ENCODE measurements at regions of chr2 and their contacts with region 1.

Region 1: GRCh38 chr2:134460583-134460998 is 206.7 kb downstream of the MGAT5 start:
- DNase-seq: peak; percentile 33 to 63 (median 46)
- H3K4me3 ChIP-seq: no peak overlapping the region
- H3K27ac ChIP-seq: no peak overlapping the region
- H3K4me1 ChIP-seq: no peaks in the 10 kb centered on the region
- H3K27me3 ChIP-seq: no peaks in the 10 kb centered on the region
- CTCF ChIP-seq: peak; percentile 15 to 46 (median 34)
- EP300 ChIP-seq: no peak
- POLR2A ChIP-seq: no peak

Region 2: DNA sequence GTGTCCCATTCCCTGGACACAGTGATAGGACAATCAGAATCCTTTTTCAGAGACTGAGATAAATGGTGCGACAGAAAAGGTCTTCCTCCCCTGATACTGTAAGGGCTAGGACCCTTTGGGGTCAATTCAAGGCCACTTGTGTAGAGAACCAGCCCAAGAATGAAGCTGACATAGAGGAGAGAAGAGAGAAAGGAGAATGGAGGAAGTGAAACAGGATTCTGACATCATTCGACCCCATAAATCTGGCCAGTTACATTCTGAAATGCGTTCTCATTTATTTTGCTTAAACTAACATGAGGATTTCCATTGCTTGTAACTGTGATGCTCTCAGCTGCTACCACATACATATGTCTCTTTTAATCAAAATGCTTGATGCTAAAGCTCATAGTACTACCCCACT is 110.1 kb after region 1 on chr2:
- intact Hi-C with region 1: no loop called
- DNase-seq: no peak
- H3K4me3 ChIP-seq: no peak overlapping the region
- H3K27ac ChIP-seq: no peak overlapping the region
- H3K4me1 ChIP-seq: no peaks in the 10 kb centered on the region
- H3K27me3 ChIP-seq: no peaks in the 10 kb centered on the region
- CTCF ChIP-seq: no peak
- EP300 ChIP-seq: no peak
- POLR2A ChIP-seq: no peak

Region 3: GRCh38 chr2:134623796-134624195 is 163.2 kb after region 1 on chr2:
- intact Hi-C with region 1: no loop called
- DNase-seq: no peak
- H3K4me3 ChIP-seq: no peak overlapping the region
- H3K27ac ChIP-seq: no peak overlapping the region
- H3K4me1 ChIP-seq: no peaks in the 10 kb centered on the region
- H3K27me3 ChIP-seq: no peaks in the 10 kb centered on the region
- CTCF ChIP-seq: no peak
- EP300 ChIP-seq: no peak
- POLR2A ChIP-seq: no peak

Region 4: DNA sequence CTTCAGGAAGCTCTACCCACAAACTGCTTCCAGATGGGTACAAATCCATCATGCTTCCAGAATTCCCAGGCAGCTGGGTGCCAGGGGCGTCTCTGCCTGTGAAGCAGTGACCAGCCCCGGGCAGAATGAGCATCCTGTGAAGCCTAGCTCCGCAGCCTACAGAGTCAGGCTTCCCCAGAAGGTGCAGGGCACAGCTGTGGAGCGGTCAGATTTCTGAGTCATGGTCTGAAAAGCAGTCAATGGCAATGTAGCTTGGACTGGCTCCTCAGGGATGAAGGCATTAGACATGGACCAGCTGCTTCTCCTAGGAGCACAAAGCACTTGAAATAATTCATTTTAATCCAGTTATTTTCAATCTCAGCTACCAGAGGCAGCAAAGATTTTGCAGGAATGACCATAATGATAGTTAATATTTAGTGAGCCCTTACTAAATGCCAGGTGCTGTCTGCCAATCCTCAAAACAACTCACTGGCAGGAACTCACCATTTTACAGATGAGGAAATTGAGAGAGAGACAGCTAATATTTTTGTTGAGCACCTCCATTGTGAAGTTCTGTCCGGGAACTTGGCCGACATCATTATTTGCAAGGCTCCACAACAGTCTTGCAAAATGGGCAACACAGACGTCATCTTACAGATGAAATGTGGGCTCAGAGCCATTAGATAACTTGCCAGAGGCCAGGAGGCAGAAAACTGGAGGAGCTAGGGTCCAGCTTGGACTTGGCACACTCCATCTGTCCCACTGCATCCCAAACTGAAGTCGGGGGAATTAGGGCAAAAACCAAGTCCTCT is 409.6 kb after region 1 on chr2:
- intact Hi-C with region 1: loop called in 1 of 4 experiments (anchors 10 kb)
- DNase-seq: peak in 1 of 5 donors; percentile 10
- H3K4me3 ChIP-seq: no peak overlapping the region
- H3K27ac ChIP-seq: no peak overlapping the region
- H3K4me1 ChIP-seq: no peaks in the 10 kb centered on the region
- H3K27me3 ChIP-seq: no peaks in the 10 kb centered on the region
- CTCF ChIP-seq: no peak
- EP300 ChIP-seq: no peak
- POLR2A ChIP-seq: no peak

Region 5: GRCh38 chr2:134892282-134893070 is 431.9 kb after region 1 on chr2:
- intact Hi-C with region 1: loop called in 1 of 4 experiments (anchors 5 kb)
- DNase-seq: no peak
- H3K4me3 ChIP-seq: no peak overlapping the region
- H3K27ac ChIP-seq: no peak overlapping the region
- H3K4me1 ChIP-seq: no peaks in the 10 kb centered on the region
- H3K27me3 ChIP-seq: no peaks in the 10 kb centered on the region
- CTCF ChIP-seq: no peak
- EP300 ChIP-seq: no peak
- POLR2A ChIP-seq: no peak

Region 6: GRCh38 chr2:134900151-134900550 is 439.6 kb after region 1 on chr2:
- intact Hi-C with region 1: loop called in 2 of 4 experiments (anchors 5 to 10 kb)
- DNase-seq: no peak
- H3K4me3 ChIP-seq: no peak overlapping the region
- H3K27ac ChIP-seq: no peak overlapping the region
- H3K4me1 ChIP-seq: no peaks in the 10 kb centered on the region
- H3K27me3 ChIP-seq: no peaks in the 10 kb centered on the region
- CTCF ChIP-seq: no peak
- EP300 ChIP-seq: no peak
- POLR2A ChIP-seq: no peak

Region 7: DNA sequence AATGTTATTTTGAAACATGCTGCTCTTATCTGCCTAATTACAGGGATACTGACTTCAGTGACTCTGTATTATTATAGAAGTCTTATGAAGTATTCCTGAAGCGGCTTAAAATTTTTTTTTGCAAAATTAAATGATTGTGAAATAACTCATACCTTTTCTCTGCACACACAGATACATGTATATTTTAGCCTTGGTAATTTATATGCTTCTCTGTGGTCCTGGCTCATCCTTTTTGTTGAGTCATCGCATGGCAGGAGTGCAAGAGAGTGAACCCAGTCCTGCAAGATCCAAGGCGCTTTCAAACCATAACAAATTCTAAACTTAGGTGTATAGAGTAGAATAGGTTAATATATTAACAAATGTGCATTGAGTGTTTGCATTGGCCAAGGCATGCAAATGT is 466.6 kb after region 1 on chr2:
- intact Hi-C with region 1: no loop called
- DNase-seq: no peak
- H3K4me3 ChIP-seq: no peak overlapping the region
- H3K27ac ChIP-seq: no peak overlapping the region
- H3K4me1 ChIP-seq: peaks cover 12% of the 10 kb centered on the region
- H3K27me3 ChIP-seq: no peaks in the 10 kb centered on the region
- CTCF ChIP-seq: no peak
- EP300 ChIP-seq: no peak
- POLR2A ChIP-seq: no peak

Region 8: GRCh38 chr2:135974036-135974435 is 1513.4 kb after region 1 on chr2:
- intact Hi-C with region 1: no loop called
- DNase-seq: no peak
- H3K4me3 ChIP-seq: no peak overlapping the region
- H3K27ac ChIP-seq: no peak overlapping the region
- H3K4me1 ChIP-seq: no peaks in the 10 kb centered on the region
- H3K27me3 ChIP-seq: no peaks in the 10 kb centered on the region
- CTCF ChIP-seq: no peak
- EP300 ChIP-seq: no peak
- POLR2A ChIP-seq: no peak